Psoas muscle (tissue), 8 donors: ENCODE measurements at regions of chr19 and their contacts with region 1.

Region 1: DNA sequence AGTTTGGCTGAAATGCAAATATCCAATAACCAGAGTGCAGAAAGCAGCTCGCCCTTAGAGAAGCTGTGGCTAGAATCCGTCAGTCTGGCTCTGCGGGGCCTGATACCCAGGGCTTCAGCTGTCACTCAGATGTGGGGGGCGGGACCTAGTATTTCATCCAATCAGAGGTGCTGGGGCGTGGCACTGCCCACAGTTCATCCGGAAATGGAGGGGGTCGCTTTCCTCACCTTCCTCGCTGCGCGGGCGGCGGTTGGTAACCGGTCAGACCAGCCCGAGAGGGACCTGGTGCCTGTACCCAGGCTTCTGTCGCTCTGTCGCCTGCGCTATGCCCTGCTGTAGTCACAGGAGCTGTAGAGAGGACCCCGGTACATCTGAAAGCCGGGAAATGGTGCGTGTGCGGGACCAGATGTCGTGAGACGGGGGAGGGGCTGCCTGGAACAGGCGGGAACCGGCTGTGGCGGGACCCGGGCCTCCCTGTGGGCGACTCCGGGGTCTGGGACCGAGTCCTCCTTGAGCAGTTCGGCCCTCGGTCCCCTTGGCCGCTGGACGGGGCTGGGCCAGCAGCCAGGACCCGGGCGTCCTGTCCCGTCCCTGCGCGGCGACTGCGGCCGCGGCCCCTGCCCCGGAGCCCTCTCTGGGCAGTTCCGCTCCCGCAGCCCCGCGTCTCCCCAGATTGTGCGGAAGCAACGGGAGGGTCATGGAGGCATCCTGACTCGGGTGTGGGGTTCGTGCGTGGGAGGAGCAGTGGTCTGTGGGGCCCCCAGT is at the start of gene ZNF700:
- DNase-seq: peak; percentile 93 to 95
- ATAC-seq: peak; percentile 99 to 100 (median 99)
- H3K4me3 ChIP-seq: peak within 1 kb of the TSS; percentile 99
- H3K27ac ChIP-seq: peak within 1 kb of the TSS; percentile 95
- H3K4me1 ChIP-seq: peaks cover 5% of the 10 kb centered on the region
- H3K27me3 ChIP-seq: no peaks in the 10 kb centered on the region
- CTCF ChIP-seq: no peak
- total RNA-seq, gene ZNF700: 2.6 to 3.3 (median 3.1) TPM

Region 2: GRCh38 chr19:11781295-11782052 is 143.6 kb before region 1 on chr19:
- intact Hi-C with region 1: no loop called
- DNase-seq: no peak
- ATAC-seq: no peak
- H3K4me3 ChIP-seq: no peak overlapping the region
- H3K27ac ChIP-seq: no peak overlapping the region
- H3K4me1 ChIP-seq: no peaks in the 10 kb centered on the region
- H3K27me3 ChIP-seq: no peaks in the 10 kb centered on the region
- CTCF ChIP-seq: no peak

Region 3: GRCh38 chr19:11798391-11799330 is 126.4 kb before region 1 on chr19 and contains the start of gene ZNF491:
- intact Hi-C with region 1: loop called in 1 of 2 experiments (anchors 5 kb)
- DNase-seq: peak; percentile 91 to 94
- ATAC-seq: peak; percentile 98 to 99 (median 98)
- H3K4me3 ChIP-seq: peak within 1 kb of the TSS; percentile 93
- H3K27ac ChIP-seq: peak within 1 kb of the TSS; percentile 87
- H3K4me1 ChIP-seq: peaks cover 14% of the 10 kb centered on the region
- H3K27me3 ChIP-seq: no peaks in the 10 kb centered on the region
- CTCF ChIP-seq: peak; percentile 14
- total RNA-seq, gene ZNF491: 0.66 to 1.9 (median 1.1) TPM

Region 4: GRCh38 chr19:11964858-11965645 is 40.0 kb after region 1 on chr19 and contains the start of gene ZNF763:
- intact Hi-C with region 1: loop called in 1 of 2 experiments (anchors 2 kb)
- DNase-seq: peak; percentile 92 to 94
- ATAC-seq: peak; percentile 96 to 99 (median 98)
- H3K4me3 ChIP-seq: peak within 1 kb of the TSS; percentile 71
- H3K27ac ChIP-seq: peak within 1 kb of the TSS; percentile 63
- H3K4me1 ChIP-seq: peaks cover 10% of the 10 kb centered on the region
- H3K27me3 ChIP-seq: no peaks in the 10 kb centered on the region
- CTCF ChIP-seq: no peak
- total RNA-seq, gene ZNF763: 0.22 to 1.6 (median 0.81) TPM